A673 (cell line): ENCODE measurements at regions of chr13 and their contacts with region 1.

Region 1: GRCh38 chr13:78241278-78241919 is 322.8 kb upstream of the EDNRB start:
- DNase-seq: peak; percentile 73
- H3K4me3 ChIP-seq: no peak overlapping the region
- H3K27ac ChIP-seq: no peak overlapping the region
- H3K4me1 ChIP-seq: no peaks in the 10 kb centered on the region
- H3K27me3 ChIP-seq: no peaks in the 10 kb centered on the region
- CTCF ChIP-seq: peak; percentile 90

Region 2: GRCh38 chr13:78595495-78596398 is 354.3 kb after region 1 on chr13:
- CTCF ChIA-PET with region 1: no interaction called
- POLR2A ChIA-PET with region 1: no interaction called
- intact Hi-C with region 1: loop called (anchors 10 kb)
- DNase-seq: peak; percentile 52
- H3K4me3 ChIP-seq: peak overlapping the region; percentile 43
- H3K27ac ChIP-seq: no peak overlapping the region
- H3K4me1 ChIP-seq: peaks cover 5% of the 10 kb centered on the region
- H3K27me3 ChIP-seq: peaks cover 99% of the 10 kb centered on the region
- CTCF ChIP-seq: no peak